ENCODE measurements at regions of chr10 and their contacts with region 1.

Region 1: GRCh38 chr10:75210282-75211006 is at the start of gene VDAC2:
- DNase-seq: peak; percentile 99
- ATAC-seq: peak; percentile 88
- H3K4me3 ChIP-seq: peak within 1 kb of the TSS; percentile 72
- H3K27ac ChIP-seq: peak within 1 kb of the TSS; percentile 85
- H3K4me1 ChIP-seq: peaks cover 45% of the 10 kb centered on the region
- H3K27me3 ChIP-seq: no peaks in the 10 kb centered on the region
- CTCF ChIP-seq: no peak
- total RNA-seq, gene VDAC2: 463 and 542 TPM in 2 replicates

Region 2: DNA sequence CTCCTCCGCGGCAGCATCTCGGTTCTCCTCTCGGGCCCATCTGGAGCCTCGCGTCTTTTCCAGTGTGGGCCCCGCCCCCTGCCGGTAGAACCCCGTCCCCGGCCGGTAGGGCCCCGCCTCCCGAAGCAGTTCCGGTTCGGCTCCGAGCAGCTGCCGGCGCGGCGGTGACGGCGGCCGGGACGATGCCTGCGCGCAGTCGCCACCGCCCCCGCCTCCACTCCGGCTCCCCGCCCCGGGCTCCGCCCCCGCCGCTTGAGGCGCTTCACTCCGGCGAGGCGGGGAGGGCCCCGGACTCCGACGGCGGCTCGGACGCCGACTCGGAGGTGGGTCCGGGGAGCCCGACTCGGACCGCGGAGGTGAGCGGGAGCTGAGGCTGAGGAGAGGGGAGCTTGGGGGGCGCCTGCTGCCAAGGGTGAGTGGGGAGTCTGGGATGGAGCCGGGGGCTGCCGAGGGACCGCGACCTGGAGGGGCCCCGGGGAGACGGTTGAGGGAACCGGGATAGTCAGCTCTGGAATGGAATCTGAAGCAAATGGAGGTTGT is 99.0 kb before region 1 on chr10 and contains the start of gene SAMD8:
- CTCF ChIA-PET with region 1: no interaction called
- POLR2A ChIA-PET with region 1: no interaction called
- intact Hi-C with region 1: loop called (anchors 1 kb)
- DNase-seq: peak; percentile 100
- ATAC-seq: peak; percentile 84
- H3K4me3 ChIP-seq: peak within 1 kb of the TSS; percentile 74
- H3K27ac ChIP-seq: peak within 1 kb of the TSS; percentile 64
- H3K4me1 ChIP-seq: peaks cover 25% of the 10 kb centered on the region
- H3K27me3 ChIP-seq: no peaks in the 10 kb centered on the region
- CTCF ChIP-seq: peak; percentile 50
- total RNA-seq, gene SAMD8: 47.4 and 48.6 TPM in 2 replicates

Region 3: DNA sequence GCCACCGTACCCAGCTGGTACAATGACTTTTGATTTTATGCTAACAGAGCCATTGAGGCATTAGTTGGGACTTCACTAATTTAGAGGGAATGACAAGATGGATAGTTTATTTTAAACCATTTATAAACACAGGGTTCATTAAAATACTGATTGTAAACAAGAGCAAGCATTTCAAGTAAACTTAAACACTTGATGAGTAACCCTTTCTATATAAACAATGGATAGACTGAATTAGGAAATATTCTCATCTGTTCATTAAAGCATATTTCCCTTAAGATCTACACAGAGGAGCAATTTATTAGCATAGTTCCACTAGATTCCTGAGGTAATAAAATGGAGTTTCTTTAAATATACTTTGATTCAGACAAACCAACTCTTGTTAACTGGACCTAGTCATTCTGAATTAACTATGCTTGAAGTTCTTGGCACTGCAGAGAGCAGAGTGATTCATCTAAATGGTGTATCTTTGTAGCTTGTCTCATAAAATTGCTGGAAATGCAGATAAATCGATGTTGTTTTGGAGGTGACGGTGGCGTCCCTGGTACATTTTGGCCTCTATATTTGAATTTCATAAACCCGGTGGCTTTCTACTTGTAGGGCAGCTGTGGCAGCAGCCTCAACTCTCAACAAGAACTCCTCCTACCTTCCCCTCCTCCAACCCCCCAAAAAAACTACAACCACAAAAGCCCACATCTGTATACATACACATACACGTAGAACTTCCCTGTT is 15.2 kb before region 1 on chr10:
- CTCF ChIA-PET with region 1: interaction called, 12 read pairs
- POLR2A ChIA-PET with region 1: interaction called, 9 read pairs
- intact Hi-C with region 1: loop called (anchors 1 kb)
- DNase-seq: peak; percentile 98
- ATAC-seq: peak; percentile 78
- H3K4me3 ChIP-seq: peak overlapping the region; percentile 4; the same call in 1 of the 2 replicates
- H3K27ac ChIP-seq: peak overlapping the region; percentile 75
- H3K4me1 ChIP-seq: peaks cover 37% of the 10 kb centered on the region
- H3K27me3 ChIP-seq: no peaks in the 10 kb centered on the region
- CTCF ChIP-seq: no peak

Region 4: GRCh38 chr10:75226656-75227055 is 16.2 kb after region 1 on chr10:
- CTCF ChIA-PET with region 1: interaction called, 13 read pairs
- POLR2A ChIA-PET with region 1: interaction called, 34 read pairs
- intact Hi-C with region 1: loop called (anchors 1 kb)
- DNase-seq: no peak
- ATAC-seq: no peak
- H3K4me3 ChIP-seq: no peak overlapping the region
- H3K27ac ChIP-seq: no peak overlapping the region
- H3K4me1 ChIP-seq: peaks cover 32% of the 10 kb centered on the region
- H3K27me3 ChIP-seq: no peaks in the 10 kb centered on the region
- CTCF ChIP-seq: no peak